Activated CD8-positive, alpha-beta T cell treated with anti-CD3 and anti-CD28 coated beads for 36 hours (primary cell): ENCODE measurements at regions of chr7 and their contacts with region 1.

Region 1: DNA sequence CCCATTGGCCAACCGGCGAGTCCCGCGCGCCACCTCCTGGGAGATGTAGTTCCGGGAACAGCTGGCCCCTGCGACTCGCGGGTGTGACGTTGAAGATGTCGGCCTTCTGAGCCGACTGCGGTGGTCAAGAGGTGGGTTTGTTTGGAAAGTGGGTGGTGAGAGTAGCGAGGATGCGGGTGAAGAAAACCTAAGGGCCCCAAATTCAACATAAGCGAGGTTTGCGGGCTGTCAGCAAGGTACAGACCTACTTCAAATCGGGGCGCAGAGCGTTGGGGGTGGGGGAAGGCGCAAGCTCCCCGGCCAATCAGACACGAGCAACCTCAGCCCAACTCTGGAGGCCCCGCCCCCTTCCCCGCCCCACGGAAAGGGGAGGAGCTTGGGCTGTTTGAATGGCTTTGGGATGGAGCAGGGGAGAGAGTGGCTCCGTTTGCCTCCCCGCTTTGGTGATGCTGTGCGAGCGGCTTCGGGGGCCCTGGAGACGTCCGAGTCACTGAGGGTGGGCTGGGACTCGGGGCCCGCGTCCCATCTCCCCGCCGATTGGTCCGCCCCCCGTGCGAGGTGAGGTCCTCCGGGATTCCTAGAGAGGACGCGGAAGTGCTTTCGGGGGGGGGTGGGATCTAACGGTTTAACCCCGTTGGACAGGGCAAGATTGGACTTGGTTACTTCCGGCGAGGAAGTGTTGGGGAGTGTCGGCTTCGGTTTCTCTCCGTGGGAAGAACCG is at the start of gene ZKSCAN5:
- DNase-seq: peak; percentile 98
- ATAC-seq: peak; percentile 89
- H3K4me3 Mint-ChIP-seq: peak within 1 kb of the TSS; percentile 84
- H3K27ac Mint-ChIP-seq: peak within 1 kb of the TSS; percentile 95
- H3K4me1 Mint-ChIP-seq: peaks cover 27% of the 10 kb centered on the region
- H3K27me3 Mint-ChIP-seq: no peaks in the 10 kb centered on the region
- CTCF ChIP-seq: no peak
- total RNA-seq, gene ZKSCAN5: 7.6 to 7.9 TPM

Region 2: GRCh38 chr7:99465421-99465768 is 39.4 kb before region 1 on chr7:
- CTCF ChIA-PET with region 1: interaction called, 4 read pairs
- POLR2A ChIA-PET with region 1: interaction called, 11 read pairs
- intact Hi-C with region 1: no loop called
- DNase-seq: no peak
- ATAC-seq: peak; percentile 2
- H3K4me3 Mint-ChIP-seq: peak overlapping the region; percentile 97
- H3K27ac Mint-ChIP-seq: peak overlapping the region; percentile 92
- H3K4me1 Mint-ChIP-seq: peaks cover 31% of the 10 kb centered on the region
- H3K27me3 Mint-ChIP-seq: no peaks in the 10 kb centered on the region
- CTCF ChIP-seq: no peak

Region 3: DNA sequence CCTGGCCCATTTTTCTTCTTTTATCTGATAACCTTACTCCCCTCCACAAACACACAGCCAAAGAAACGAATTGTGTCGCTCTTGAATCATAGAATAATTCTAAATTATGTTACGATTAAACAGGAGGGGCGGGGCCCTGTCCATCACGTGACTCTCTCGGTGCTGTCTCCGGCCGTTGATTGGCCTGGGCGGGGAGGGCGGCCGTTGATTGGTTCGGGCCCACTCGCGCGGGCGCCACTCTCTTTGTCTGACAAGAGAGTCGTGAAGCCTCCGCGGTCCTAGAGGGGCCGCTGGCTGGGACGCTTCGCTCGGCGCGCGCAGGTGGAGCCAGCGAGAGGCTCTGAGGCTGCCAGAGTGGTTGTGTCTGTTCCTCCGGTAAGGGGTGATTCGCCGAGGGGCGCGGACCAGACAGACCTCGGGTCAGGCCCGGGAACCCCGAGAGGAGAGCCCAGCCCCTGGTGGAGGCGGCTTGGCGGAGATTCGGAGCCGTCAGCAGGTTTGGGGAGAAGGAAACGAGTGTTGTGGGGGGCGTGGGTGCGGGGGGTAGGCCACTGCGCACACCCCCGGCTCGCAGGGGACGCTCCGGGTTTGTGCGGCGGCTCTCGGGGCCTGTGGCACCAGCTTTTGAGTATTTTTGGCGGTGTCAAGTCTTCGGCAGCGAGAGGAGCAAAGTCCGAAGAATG is 32.1 kb before region 1 on chr7 and contains the start of gene ZNF789:
- CTCF ChIA-PET with region 1: no interaction called
- POLR2A ChIA-PET with region 1: interaction called, 19 read pairs
- intact Hi-C with region 1: loop called (anchors 2 kb)
- DNase-seq: peak; percentile 100
- ATAC-seq: peak; percentile 98
- H3K4me3 Mint-ChIP-seq: peak within 1 kb of the TSS; percentile 95
- H3K27ac Mint-ChIP-seq: peak within 1 kb of the TSS; percentile 97
- H3K4me1 Mint-ChIP-seq: peaks cover 33% of the 10 kb centered on the region
- H3K27me3 Mint-ChIP-seq: no peaks in the 10 kb centered on the region
- CTCF ChIP-seq: no peak
- total RNA-seq, gene ZNF789: 18.8 to 19.1 TPM

Region 4: GRCh38 chr7:99551767-99552463 is 47.2 kb after region 1 on chr7 and contains the start of gene FAM200A:
- CTCF ChIA-PET with region 1: interaction called, 6 read pairs
- POLR2A ChIA-PET with region 1: interaction called, 20 read pairs
- intact Hi-C with region 1: loop called (anchors 10 kb)
- DNase-seq: peak; percentile 91
- ATAC-seq: peak; percentile 99
- H3K4me3 Mint-ChIP-seq: peak within 1 kb of the TSS; percentile 90
- H3K27ac Mint-ChIP-seq: peak within 1 kb of the TSS; percentile 93
- H3K4me1 Mint-ChIP-seq: peaks cover 27% of the 10 kb centered on the region
- H3K27me3 Mint-ChIP-seq: no peaks in the 10 kb centered on the region
- CTCF ChIP-seq: no peak
- total RNA-seq, gene FAM200A: 4.8 to 4.9 TPM

Region 5: GRCh38 chr7:99558306-99559174 is 53.8 kb after region 1 on chr7 and contains the start of gene ZNF655:
- CTCF ChIA-PET with region 1: interaction called, 6 read pairs
- POLR2A ChIA-PET with region 1: interaction called, 20 read pairs
- intact Hi-C with region 1: loop called (anchors 10 kb)
- DNase-seq: peak; percentile 96
- ATAC-seq: peak; percentile 85
- H3K4me3 Mint-ChIP-seq: peak within 1 kb of the TSS; percentile 99
- H3K27ac Mint-ChIP-seq: peak within 1 kb of the TSS; percentile 100
- H3K4me1 Mint-ChIP-seq: peaks cover 52% of the 10 kb centered on the region
- H3K27me3 Mint-ChIP-seq: no peaks in the 10 kb centered on the region
- CTCF ChIP-seq: no peak
- total RNA-seq, gene ZNF655: 63.0 to 65.2 TPM

Region 6: GRCh38 chr7:99719996-99720769 is 215.4 kb after region 1 on chr7:
- CTCF ChIA-PET with region 1: no interaction called
- POLR2A ChIA-PET with region 1: no interaction called
- intact Hi-C with region 1: no loop called
- DNase-seq: no peak
- ATAC-seq: peak; percentile 77
- H3K4me3 Mint-ChIP-seq: no peak overlapping the region
- H3K27ac Mint-ChIP-seq: no peak overlapping the region
- H3K4me1 Mint-ChIP-seq: peaks cover 16% of the 10 kb centered on the region
- H3K27me3 Mint-ChIP-seq: no peaks in the 10 kb centered on the region
- CTCF ChIP-seq: no peak

Region 7: GRCh38 chr7:99806839-99807478 is 302.2 kb after region 1 on chr7:
- CTCF ChIA-PET with region 1: no interaction called
- POLR2A ChIA-PET with region 1: no interaction called
- intact Hi-C with region 1: no loop called
- DNase-seq: no peak
- ATAC-seq: no peak
- H3K4me3 Mint-ChIP-seq: no peak overlapping the region
- H3K27ac Mint-ChIP-seq: no peak overlapping the region
- H3K4me1 Mint-ChIP-seq: no peaks in the 10 kb centered on the region
- H3K27me3 Mint-ChIP-seq: peaks cover 31% of the 10 kb centered on the region
- CTCF ChIP-seq: no peak